Activated naive CD4-positive, alpha-beta T cell treated with anti-CD3 and anti-CD28 coated beads for 36 hours (primary cell): ENCODE measurements at regions of chr1 and their contacts with region 1.

Region 1: DNA sequence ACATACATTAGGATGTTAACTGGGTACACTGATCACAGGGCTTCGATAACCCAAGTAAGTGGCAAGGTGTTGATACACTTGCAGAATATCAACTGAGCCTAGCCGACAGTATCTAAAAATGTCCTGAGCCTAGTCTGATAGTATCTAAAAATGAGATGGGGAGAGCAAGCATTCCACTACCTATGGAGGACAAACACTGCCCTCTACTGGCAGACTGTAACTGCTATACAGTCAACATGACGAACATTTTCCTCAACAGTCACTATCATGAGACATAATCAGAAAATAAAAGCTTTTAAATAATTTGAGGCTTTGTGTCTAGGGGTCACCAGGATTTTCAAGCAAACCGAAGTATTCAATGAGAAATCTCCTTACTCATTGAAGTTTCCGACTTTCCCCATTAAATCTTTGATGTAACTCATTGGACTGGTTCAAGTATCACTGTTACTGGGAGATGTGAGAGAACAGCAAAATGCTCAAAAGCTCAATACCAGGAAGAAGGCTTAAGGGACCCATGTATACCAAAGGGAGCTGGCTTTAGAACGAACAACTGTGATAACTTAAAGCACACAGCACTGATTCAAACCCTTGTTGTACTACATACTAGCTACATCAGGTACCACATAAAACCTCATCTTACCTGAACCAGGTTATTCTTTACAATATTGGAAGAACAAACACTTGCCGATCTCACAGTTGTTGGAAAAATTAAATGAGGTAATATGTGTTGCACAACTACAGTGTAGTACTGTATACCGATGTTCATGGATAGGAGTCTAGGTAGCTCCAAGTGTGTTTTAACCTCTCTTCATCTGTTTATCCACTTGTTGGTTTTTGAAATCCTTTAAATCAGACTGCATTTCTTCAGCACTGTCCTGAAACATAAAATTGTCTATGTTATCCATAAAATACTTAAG is 31.1 kb upstream of the SLC45A3 start:
- DNase-seq: peak; percentile 85
- H3K4me3 Mint-ChIP-seq: no peak overlapping the region
- H3K27ac Mint-ChIP-seq: peak overlapping the region; percentile 56
- H3K4me1 Mint-ChIP-seq: peaks cover 22% of the 10 kb centered on the region
- H3K27me3 Mint-ChIP-seq: no peaks in the 10 kb centered on the region

Region 2: GRCh38 chr1:205680073-205680851 is 31.1 kb before region 1 on chr1 and contains the start of gene SLC45A3:
- CTCF ChIA-PET with region 1: interaction called, 14 read pairs
- intact Hi-C with region 1: loop called (anchors 2 kb)
- DNase-seq: peak; percentile 17
- H3K4me3 Mint-ChIP-seq: peak within 1 kb of the TSS; percentile 70
- H3K27ac Mint-ChIP-seq: no peak within 1 kb of the TSS
- H3K4me1 Mint-ChIP-seq: peaks cover 12% of the 10 kb centered on the region
- H3K27me3 Mint-ChIP-seq: peaks cover 10% of the 10 kb centered on the region
- total RNA-seq, gene SLC45A3: 0.15 to 0.26 TPM

Region 3: GRCh38 chr1:205783904-205784303 is 72.5 kb after region 1 on chr1:
- CTCF ChIA-PET with region 1: interaction called, 13 read pairs
- intact Hi-C with region 1: loop called (anchors 2 kb)
- DNase-seq: no peak
- H3K4me3 Mint-ChIP-seq: no peak overlapping the region
- H3K27ac Mint-ChIP-seq: no peak overlapping the region
- H3K4me1 Mint-ChIP-seq: peaks cover 9% of the 10 kb centered on the region
- H3K27me3 Mint-ChIP-seq: no peaks in the 10 kb centered on the region

Region 4: GRCh38 chr1:205832326-205832751 is 121.0 kb after region 1 on chr1:
- CTCF ChIA-PET with region 1: no interaction called
- intact Hi-C with region 1: no loop called
- DNase-seq: no peak
- H3K4me3 Mint-ChIP-seq: no peak overlapping the region
- H3K27ac Mint-ChIP-seq: no peak overlapping the region
- H3K4me1 Mint-ChIP-seq: no peaks in the 10 kb centered on the region
- H3K27me3 Mint-ChIP-seq: peaks cover 3% of the 10 kb centered on the region

Region 5: DNA sequence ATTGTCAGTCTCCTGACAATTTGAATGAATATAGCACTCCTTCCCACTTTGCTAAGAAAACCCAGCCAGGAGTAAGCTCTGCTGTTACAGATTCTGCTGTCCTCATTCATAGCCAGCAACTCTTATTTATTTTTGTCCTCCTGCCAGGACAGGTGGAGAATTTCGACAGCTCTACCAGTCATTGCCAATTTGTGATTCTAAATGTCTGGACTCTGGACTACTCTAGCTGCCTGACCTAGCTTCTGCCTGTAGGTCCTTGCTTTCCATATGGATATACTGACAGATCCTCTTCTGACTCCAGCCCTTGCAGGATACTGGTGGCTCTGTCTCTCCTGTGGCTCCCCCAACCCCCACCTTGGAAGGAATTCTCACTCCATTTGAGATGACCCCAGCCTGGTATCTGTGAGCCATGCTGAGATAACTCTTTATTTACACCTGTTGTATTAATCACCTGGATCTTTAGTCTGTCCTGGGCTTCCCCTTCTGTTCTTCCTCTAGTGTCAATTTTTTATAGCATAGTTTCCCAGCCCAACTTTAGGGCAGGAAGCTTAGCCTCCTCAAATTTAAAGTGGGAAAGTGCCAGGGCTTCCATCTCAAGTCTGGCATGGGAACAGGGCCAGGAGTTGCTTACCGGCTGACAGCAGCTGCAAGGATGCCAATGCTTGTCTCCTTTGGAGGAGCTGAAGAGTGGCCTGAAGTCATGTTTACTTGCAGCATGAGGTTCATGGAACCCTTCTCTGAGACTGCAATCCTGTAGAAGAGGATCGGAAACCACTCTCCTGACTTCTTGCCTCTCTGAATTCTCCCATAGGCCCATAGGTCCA is 131.9 kb after region 1 on chr1:
- CTCF ChIA-PET with region 1: no interaction called
- intact Hi-C with region 1: no loop called
- DNase-seq: no peak
- H3K4me3 Mint-ChIP-seq: no peak overlapping the region
- H3K27ac Mint-ChIP-seq: no peak overlapping the region
- H3K4me1 Mint-ChIP-seq: peaks cover 6% of the 10 kb centered on the region
- H3K27me3 Mint-ChIP-seq: no peaks in the 10 kb centered on the region